PC-3 (cell line): ENCODE measurements at regions of chr5 and their contacts with region 1.

Region 1: GRCh38 chr5:168987543-168988300 is 313.2 kb downstream of the SLIT3 start:
- DNase-seq: peak; percentile 90
- ATAC-seq: peak; percentile 80
- H3K4me3 ChIP-seq: peak overlapping the region; percentile 10; the same call in 1 of the 2 replicates
- H3K27ac ChIP-seq: no peak overlapping the region
- H3K4me1 ChIP-seq: peaks cover 14% of the 10 kb centered on the region
- H3K27me3 ChIP-seq: 0 out of 2 replicates have a peak, but pooled peaks cover 20% of the 10 kb centered on the region
- CTCF ChIP-seq: peak; percentile 97

Region 2: DNA sequence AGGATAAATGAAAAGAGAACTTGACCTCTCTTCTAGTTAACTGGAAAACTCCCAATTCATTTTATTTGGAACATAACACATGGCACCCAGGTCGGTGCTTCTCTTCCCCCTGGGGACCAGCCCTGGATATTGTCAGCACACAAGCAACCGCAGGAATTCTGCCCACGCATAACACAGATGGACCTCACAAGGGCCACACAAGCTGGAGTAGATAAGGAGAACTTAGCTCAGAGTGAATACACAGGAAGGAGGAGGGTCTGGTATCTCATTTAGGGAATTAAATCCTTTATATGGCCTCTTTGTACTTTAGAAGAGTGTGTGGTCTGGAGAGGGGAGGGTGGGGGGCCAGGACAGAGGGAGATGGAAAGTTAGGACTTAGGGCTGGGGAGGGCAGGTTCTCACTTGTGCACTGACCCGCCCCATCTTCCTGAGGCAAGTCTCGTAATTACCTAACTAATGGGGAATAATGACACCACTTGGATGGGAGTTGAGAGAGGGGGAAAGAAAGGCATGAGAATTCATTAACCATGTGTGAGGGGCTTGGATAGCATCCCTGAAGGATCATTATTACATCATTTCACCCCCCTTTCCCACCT is 1037.5 kb before region 1 on chr5:
- CTCF ChIA-PET with region 1: interaction called, 14 read pairs
- POLR2A ChIA-PET with region 1: no interaction called
- intact Hi-C with region 1: no loop called
- DNase-seq: no peak
- ATAC-seq: no peak
- H3K4me3 ChIP-seq: no peak overlapping the region
- H3K27ac ChIP-seq: no peak overlapping the region
- H3K4me1 ChIP-seq: no peaks in the 10 kb centered on the region
- H3K27me3 ChIP-seq: peaks cover 69% of the 10 kb centered on the region
- CTCF ChIP-seq: no peak

Region 3: GRCh38 chr5:169153405-169153804 is 165.7 kb after region 1 on chr5:
- CTCF ChIA-PET with region 1: no interaction called
- POLR2A ChIA-PET with region 1: no interaction called
- intact Hi-C with region 1: loop called (anchors 5 kb)
- DNase-seq: no peak
- ATAC-seq: no peak
- H3K4me3 ChIP-seq: no peak overlapping the region
- H3K27ac ChIP-seq: no peak overlapping the region
- H3K4me1 ChIP-seq: no peaks in the 10 kb centered on the region
- H3K27me3 ChIP-seq: no peaks in the 10 kb centered on the region
- CTCF ChIP-seq: no peak

Region 4: GRCh38 chr5:169302491-169303118 is 314.9 kb after region 1 on chr5:
- CTCF ChIA-PET with region 1: no interaction called
- POLR2A ChIA-PET with region 1: no interaction called
- intact Hi-C with region 1: loop called (anchors 1 kb)
- DNase-seq: peak; percentile 80
- ATAC-seq: peak; percentile 49
- H3K4me3 ChIP-seq: no peak overlapping the region
- H3K27ac ChIP-seq: no peak overlapping the region
- H3K4me1 ChIP-seq: no peaks in the 10 kb centered on the region
- H3K27me3 ChIP-seq: peaks cover 59% of the 10 kb centered on the region
- CTCF ChIP-seq: peak; percentile 97

Region 5: GRCh38 chr5:169695919-169696490 is 708.3 kb after region 1 on chr5:
- CTCF ChIA-PET with region 1: no interaction called
- POLR2A ChIA-PET with region 1: no interaction called
- intact Hi-C with region 1: loop called (anchors 5 kb)
- DNase-seq: peak; percentile 96
- ATAC-seq: peak; percentile 87
- H3K4me3 ChIP-seq: peak overlapping the region; percentile 32; the same call in 1 of the 2 replicates
- H3K27ac ChIP-seq: peak overlapping the region; percentile 82
- H3K4me1 ChIP-seq: peaks cover 28% of the 10 kb centered on the region
- H3K27me3 ChIP-seq: no peaks in the 10 kb centered on the region
- CTCF ChIP-seq: no peak